Ovary (tissue), 10 donors: ENCODE measurements at regions of chr5 and their contacts with region 1.

Region 1: DNA sequence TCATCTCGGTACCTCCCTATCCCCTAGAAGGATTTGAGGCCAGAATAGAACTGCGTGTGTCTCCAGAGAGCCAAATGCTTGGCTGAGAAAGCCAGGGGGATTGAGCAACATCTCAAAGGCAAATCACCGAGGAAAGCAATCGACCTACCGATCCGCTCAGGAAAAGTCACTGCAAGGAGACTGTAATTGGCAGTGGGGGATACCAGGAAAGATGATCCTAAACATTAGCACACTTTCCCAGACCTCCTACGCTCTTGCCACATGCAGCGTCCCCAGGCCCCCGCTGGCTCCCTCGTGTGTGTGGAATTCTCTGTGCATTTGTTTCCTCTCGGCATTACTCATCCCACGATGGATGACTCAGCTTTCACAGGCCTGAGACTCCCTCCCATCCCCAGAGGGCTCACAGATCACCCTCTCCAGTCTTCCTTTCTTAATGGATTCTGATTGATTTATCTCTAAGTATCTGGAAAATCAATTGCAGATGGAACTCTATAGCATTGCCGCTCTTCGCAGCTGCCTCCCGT is 82.2 kb upstream of the ICE1 start:
- DNase-seq: peak; percentile 77 to 88 (median 80)
- H3K4me3 ChIP-seq: no peak overlapping the region
- H3K27ac ChIP-seq: peak overlapping the region in 1 of 2 donors; percentile 60
- H3K4me1 ChIP-seq: peaks cover 3% of the 10 kb centered on the region
- H3K27me3 ChIP-seq: no peaks in the 10 kb centered on the region
- CTCF ChIP-seq: peak; percentile 12 to 57 (median 51)
- EP300 ChIP-seq: no peak
- POLR2A ChIP-seq: no peak

Region 2: DNA sequence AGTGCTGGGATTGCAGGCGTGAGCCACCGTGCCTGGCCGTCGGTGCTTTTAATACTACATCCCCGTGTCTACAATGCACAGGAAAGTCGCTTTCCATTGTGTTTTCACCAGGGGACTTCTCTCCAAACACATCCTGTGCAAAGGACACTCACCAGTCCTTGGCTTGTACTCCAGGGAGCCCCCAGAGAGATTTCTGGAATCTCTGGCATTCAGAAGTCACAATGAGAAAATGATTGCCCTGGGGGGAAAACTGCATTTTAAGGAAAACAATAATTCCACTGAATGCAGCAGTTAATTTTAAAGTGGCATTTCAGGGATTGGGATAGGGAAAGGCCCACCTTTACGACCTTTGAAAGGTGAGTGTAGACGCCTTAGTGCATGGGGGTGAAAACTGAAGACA is 88.2 kb before region 1 on chr5:
- intact Hi-C with region 1: no loop called
- DNase-seq: no peak
- H3K4me3 ChIP-seq: no peak overlapping the region
- H3K27ac ChIP-seq: no peak overlapping the region
- H3K4me1 ChIP-seq: no peaks in the 10 kb centered on the region
- H3K27me3 ChIP-seq: no peaks in the 10 kb centered on the region
- CTCF ChIP-seq: no peak
- EP300 ChIP-seq: no peak
- POLR2A ChIP-seq: no peak

Region 3: DNA sequence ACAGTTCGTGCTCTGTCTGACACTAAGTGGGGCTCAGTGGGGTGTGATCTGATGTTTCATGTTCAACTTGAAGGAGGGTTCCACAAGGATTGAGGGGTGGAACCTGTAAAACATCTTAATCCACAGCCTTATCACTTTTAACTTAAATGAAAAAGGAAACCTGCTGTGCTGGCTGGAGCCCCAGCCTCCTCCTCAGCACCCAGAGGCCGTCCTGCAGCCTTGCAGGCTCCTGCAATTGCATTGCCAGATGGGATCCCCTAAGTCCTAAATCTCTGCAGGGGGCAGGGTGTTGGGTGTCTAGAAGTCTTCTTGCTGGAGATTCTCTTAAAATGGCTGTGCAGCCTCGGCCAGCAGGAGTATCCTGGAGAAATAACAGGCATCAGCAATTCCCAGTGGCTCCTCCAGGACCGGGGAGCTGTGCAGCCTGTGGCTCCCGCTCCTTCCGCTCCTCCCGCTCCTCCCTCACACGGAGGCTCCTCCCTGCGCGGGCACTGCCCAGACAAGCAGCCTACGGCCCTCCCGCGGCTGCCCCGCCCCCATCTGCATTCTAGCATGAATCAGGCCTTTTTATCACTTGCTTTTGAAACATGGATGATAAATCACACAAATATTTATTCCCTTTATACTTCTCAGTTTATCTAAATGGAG is 69.2 kb before region 1 on chr5:
- intact Hi-C with region 1: loop called in 1 of 4 experiments (anchors 5 kb)
- DNase-seq: peak; percentile 75 to 88 (median 78)
- H3K4me3 ChIP-seq: peak overlapping the region; percentile 7
- H3K27ac ChIP-seq: no peak overlapping the region
- H3K4me1 ChIP-seq: peaks cover 2% of the 10 kb centered on the region
- H3K27me3 ChIP-seq: no peaks in the 10 kb centered on the region
- CTCF ChIP-seq: no peak
- EP300 ChIP-seq: no peak
- POLR2A ChIP-seq: no peak

Region 4: DNA sequence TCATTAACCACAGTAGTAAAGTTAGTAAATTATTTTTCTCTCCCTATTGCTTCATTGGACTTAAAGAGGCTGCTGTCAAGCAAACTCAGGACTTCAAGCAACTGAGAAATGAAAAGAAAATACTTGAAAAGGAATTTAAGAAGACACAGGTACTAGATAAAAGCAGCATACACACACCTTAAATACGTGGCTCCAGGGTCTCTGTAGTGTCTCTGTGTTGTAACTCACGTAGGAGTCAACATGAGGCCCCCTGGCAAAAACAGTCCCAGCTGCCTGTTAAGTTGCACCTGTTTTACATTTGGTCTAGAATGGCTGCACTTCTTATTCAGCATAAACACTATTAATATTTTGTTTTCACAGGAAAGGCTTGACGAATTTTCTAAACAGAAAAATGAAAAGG is 107.1 kb after region 1 on chr5:
- intact Hi-C with region 1: no loop called
- DNase-seq: no peak
- H3K4me3 ChIP-seq: no peak overlapping the region
- H3K27ac ChIP-seq: no peak overlapping the region
- H3K4me1 ChIP-seq: no peaks in the 10 kb centered on the region
- H3K27me3 ChIP-seq: no peaks in the 10 kb centered on the region
- CTCF ChIP-seq: no peak
- EP300 ChIP-seq: no peak
- POLR2A ChIP-seq: no peak